ENCODE measurements at regions of chr5 and their contacts with region 1.

Region 1: DNA sequence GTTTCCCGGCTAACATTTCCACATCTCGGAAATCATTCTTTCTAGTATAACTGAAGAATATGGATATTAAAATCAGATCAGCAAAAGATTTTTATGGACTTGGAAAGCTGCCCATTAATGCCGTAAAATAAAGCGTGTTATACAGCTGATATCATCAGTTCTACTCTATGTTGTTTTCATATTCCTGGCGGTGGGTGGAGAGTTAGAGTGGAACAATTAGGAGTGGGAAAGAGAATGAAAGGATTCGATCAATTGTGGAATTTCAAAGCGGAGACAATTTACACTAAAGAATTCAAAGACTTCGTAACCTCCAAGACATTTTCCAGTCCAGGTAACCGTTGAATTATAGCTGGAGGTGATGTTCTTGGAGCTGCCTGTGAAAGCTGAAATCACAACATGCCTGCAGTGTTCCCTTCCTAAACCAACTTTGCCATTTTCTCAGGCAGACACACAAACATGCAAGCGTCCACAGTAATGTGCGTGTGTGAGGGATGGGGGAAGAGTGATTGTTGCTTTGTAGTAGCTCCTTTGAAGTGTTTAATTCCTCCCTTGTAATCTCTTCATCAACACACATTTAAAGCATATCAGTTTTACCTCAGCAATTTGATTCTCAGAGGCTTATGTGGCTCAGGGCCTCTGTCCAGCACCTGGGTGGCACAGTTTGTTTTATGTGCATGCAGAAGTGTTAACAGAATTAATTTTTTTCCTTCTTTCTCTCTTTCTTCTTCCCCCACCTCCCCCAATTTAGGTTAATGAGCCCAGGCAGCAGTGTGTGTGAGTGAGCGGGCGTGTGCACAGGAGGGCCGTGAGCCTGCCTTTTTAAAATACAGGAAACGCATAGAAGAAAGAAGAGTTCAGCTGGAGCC is 544.1 kb downstream of the RAB3C start:
- DNase-seq: peak; percentile 55
- ATAC-seq: peak; percentile 13
- H3K4me3 Mint-ChIP-seq: no peak overlapping the region
- H3K27ac Mint-ChIP-seq: no peak overlapping the region
- H3K4me1 Mint-ChIP-seq: peaks cover 30% of the 10 kb centered on the region
- H3K27me3 Mint-ChIP-seq: no peaks in the 10 kb centered on the region

Region 2: GRCh38 chr5:59039296-59040023 is 87.5 kb before region 1 on chr5:
- POLR2A ChIA-PET with region 1: interaction called, 68 read pairs
- DNase-seq: peak; percentile 92
- ATAC-seq: peak; percentile 78
- H3K4me3 Mint-ChIP-seq: peak overlapping the region; percentile 90
- H3K27ac Mint-ChIP-seq: peak overlapping the region; percentile 98
- H3K4me1 Mint-ChIP-seq: peaks cover 30% of the 10 kb centered on the region
- H3K27me3 Mint-ChIP-seq: no peaks in the 10 kb centered on the region

Region 3: DNA sequence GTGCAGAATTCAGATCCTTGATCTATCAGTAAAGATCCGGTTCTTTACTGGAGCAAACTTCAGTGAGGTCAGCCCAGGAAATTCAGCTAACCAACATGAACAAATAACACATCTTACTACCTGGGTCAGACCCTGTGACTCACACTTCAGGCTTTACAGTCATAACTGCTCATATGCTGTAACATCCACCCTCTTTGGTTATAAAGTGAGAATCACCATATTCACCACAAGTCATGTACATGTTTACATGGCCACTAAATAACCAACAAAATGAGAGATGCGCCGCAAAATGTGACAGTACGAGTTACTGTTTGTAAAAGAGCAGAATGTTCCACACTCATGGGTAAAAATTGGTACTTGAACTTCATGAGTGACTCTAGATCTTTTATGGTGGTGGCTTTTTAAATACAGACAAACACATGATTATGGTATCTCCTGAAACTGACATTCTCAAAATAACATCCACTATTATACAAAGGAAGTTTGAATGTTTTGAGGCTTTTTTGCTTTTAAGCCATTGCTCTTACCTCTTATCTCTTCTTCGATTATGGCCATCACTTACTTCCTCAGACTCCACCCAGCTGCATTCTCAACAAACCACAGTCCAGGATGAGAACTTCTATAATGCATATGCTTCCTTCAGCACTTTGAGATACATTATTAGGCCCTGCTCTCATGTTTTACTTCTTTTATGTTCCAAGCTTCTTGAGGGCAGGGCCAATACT is 27.5 kb before region 1 on chr5:
- POLR2A ChIA-PET with region 1: interaction called, 23 read pairs
- DNase-seq: no peak
- ATAC-seq: peak; percentile 99
- H3K4me3 Mint-ChIP-seq: peak overlapping the region; percentile 36
- H3K27ac Mint-ChIP-seq: peak overlapping the region; percentile 80
- H3K4me1 Mint-ChIP-seq: peaks cover 42% of the 10 kb centered on the region
- H3K27me3 Mint-ChIP-seq: no peaks in the 10 kb centered on the region

Region 4: DNA sequence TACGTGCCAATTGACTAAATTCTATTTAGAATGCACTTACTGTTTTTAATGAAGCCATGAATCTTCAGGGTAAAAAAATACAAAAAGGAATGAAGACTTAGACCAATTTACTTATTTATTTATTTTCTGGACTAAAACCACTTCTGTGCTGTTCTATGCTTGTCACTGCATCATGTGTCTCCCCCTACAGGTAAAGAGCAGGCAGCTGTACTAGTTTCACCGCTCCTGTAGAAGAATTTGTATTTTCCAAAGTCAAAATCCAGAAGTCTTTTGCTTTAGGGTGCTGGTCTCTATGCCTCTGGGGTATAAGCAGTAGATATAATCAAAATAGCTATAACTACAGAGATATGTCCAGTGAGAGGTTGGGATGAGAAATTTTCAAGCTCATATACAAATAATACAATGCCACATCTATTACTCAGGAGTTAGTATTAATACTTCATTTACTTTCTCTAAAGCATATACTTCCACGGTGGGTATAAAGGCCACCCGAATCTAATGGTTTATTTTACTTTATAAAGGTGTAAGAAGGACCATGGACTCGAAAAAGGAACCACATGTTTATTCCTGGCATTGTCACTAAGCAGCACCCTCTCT is 47.4 kb after region 1 on chr5:
- POLR2A ChIA-PET with region 1: interaction called, 20 read pairs
- DNase-seq: no peak
- ATAC-seq: peak; percentile 66
- H3K4me3 Mint-ChIP-seq: peak overlapping the region; percentile 1
- H3K27ac Mint-ChIP-seq: no peak overlapping the region
- H3K4me1 Mint-ChIP-seq: peaks cover 33% of the 10 kb centered on the region
- H3K27me3 Mint-ChIP-seq: no peaks in the 10 kb centered on the region